Left ventricle myocardium inferior (tissue), 1 donor: ENCODE measurements at regions of chr12 and their contacts with region 1.

Region 1: DNA sequence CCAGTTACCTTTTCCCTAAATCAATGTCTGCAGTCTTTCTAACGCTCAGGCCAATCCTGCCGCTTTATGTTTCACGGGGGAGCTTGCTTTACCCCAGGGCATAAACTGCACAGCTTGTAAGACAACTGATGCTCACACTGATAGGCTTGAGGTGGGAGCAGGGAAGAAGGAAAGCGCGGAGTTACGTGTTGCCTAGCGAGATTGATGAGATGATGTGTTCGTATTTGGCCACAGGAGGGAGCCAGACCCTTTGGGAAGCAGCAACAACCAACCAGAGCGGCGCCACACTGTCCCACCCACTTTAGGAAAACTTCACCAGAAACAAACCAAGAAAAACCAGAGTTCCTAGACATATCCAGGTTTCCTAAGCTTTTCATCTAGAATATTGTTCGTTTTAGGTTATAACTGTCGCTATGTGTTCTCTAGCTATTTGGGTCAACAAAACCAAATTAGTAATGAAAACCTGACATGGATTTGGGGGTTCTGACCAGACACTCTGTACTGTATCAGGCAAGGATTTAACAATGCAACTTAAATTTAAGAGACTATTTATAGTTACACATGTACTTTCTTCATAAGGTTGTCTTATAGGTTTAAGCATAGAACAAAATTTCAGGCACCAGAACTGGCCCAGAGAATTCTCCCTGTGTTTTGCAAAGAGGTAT is 2.4 kb downstream of the IL26 start:
- DNase-seq: peak; percentile 64
- H3K4me3 ChIP-seq: peak overlapping the region; percentile 29
- H3K27ac ChIP-seq: no peak overlapping the region
- H3K4me1 ChIP-seq: peaks cover 10% of the 10 kb centered on the region
- H3K27me3 ChIP-seq: peaks cover 4% of the 10 kb centered on the region
- CTCF ChIP-seq: peak; percentile 89

Region 2: DNA sequence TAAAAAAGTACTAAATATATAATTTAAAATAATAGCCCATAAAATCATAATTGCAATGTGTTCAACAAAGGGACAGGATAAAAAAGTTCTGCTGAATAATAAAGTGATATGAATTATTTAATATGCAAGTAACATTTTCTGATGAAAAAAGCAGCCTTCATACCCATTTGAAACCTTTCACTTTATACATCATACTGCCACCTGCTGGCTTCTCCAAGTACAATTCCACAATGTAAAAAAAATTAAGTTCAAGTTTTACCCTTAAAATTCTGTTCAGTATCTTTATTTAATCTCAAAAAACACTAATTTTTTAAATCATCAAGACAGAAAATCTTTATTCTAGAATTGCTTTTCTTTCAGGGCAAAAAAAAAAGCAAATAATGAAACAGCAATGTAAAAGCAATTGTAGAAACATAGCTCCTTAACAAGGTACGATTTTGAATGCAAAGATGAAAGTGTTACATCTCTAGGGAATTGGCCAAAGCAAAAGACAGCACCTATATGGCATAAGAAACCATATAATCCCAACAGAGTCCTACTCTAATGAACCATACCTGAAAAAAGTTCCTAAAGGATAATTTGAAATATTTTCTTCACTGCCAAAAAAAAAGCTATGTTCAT is 93.9 kb after region 1 on chr12:
- intact Hi-C with region 1: loop called (anchors 2 kb)
- DNase-seq: no peak
- H3K4me3 ChIP-seq: no peak overlapping the region
- H3K27ac ChIP-seq: no peak overlapping the region
- H3K4me1 ChIP-seq: peaks cover 20% of the 10 kb centered on the region
- H3K27me3 ChIP-seq: no peaks in the 10 kb centered on the region
- CTCF ChIP-seq: peak; percentile 76